Naive thymus-derived CD4-positive, alpha-beta T cell (primary cell): ENCODE measurements at regions of chr5 and their contacts with region 1.

Region 1: DNA sequence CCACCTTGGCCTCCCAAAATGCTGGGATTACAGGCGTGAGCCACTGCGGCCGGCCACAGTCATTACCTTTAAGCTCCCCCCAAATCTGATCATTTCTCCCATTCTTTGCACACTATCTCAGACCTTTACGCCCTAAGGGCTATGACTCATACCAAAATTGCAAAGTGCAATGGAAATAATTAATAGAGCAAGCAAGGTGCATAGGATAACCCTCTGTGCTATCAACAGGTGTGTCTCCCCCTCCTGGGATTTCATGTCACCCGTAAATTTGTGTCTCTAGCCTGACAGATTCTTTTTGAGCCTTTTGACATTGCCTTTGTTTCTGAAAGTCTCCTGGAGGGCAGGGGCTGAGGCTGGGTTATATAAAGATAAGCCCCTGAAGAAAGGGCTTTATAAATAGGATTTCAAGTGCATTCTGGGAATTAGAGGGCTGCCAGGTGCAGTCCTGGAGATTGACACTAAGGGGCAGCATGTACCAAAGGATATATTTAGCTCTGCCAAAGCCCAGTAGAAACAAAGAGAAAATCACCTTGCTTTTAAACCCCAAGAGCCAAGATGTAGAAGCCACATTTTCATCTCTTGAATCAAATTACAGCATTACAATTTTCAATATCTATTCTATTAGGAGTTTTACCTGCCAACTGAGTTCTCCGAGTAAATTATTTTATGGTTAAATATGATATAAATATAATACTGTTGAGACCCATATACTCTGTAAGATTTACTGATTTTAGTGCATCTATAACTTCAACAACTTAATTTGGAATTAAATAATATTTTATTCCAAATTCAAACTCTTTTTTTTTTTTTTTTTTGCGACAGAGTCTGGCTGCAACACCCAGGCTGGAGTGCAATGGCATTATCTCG is 18.2 kb downstream of the S100Z start:
- DNase-seq: peak; percentile 14 to 63 (median 53)
- ATAC-seq: peak; percentile 90
- H3K4me3 ChIP-seq: no peak overlapping the region
- H3K4me3 Mint-ChIP-seq: no peak overlapping the region
- H3K27ac ChIP-seq: no peak overlapping the region
- H3K27ac Mint-ChIP-seq: no peak overlapping the region
- H3K4me1 ChIP-seq: no peaks in the 10 kb centered on the region
- H3K4me1 Mint-ChIP-seq: peaks cover 0 to 4% (median 0%) of the 10 kb centered on the region in 7 donors
- H3K27me3 ChIP-seq: no peaks in the 10 kb centered on the region
- H3K27me3 Mint-ChIP-seq: no peaks in the 10 kb centered on the region

Region 2: GRCh38 chr5:76849419-76850291 is 18.4 kb before region 1 on chr5 and contains the start of gene S100Z:
- CTCF ChIA-PET with region 1: no interaction called
- POLR2A ChIA-PET with region 1: no interaction called
- intact Hi-C with region 1: no loop called
- DNase-seq: peak in 7 of 9 donors; percentile 20 to 56 (median 45)
- ATAC-seq: peak; percentile 84
- H3K4me3 ChIP-seq: no peak within 1 kb of the TSS
- H3K4me3 Mint-ChIP-seq: peak within 1 kb of the TSS; percentile 56 to 82 (median 68)
- H3K27ac ChIP-seq: peak within 1 kb of the TSS; percentile 44
- H3K27ac Mint-ChIP-seq: peak within 1 kb of the TSS; percentile 58 to 94 (median 81)
- H3K4me1 ChIP-seq: peaks cover 0 to 25% of the 10 kb centered on the region in 2 donors
- H3K4me1 Mint-ChIP-seq: peaks cover 21 to 43% (median 35%) of the 10 kb centered on the region in 7 donors
- H3K27me3 ChIP-seq: no peaks in the 10 kb centered on the region
- H3K27me3 Mint-ChIP-seq: peaks cover 0 to 2% (median 0%) of the 10 kb centered on the region in 5 donors
- total RNA-seq, gene S100Z: 1.3 to 5.3 (median 4.2) TPM in 3 of 5 experiments, not detected in the others

Region 3: DNA sequence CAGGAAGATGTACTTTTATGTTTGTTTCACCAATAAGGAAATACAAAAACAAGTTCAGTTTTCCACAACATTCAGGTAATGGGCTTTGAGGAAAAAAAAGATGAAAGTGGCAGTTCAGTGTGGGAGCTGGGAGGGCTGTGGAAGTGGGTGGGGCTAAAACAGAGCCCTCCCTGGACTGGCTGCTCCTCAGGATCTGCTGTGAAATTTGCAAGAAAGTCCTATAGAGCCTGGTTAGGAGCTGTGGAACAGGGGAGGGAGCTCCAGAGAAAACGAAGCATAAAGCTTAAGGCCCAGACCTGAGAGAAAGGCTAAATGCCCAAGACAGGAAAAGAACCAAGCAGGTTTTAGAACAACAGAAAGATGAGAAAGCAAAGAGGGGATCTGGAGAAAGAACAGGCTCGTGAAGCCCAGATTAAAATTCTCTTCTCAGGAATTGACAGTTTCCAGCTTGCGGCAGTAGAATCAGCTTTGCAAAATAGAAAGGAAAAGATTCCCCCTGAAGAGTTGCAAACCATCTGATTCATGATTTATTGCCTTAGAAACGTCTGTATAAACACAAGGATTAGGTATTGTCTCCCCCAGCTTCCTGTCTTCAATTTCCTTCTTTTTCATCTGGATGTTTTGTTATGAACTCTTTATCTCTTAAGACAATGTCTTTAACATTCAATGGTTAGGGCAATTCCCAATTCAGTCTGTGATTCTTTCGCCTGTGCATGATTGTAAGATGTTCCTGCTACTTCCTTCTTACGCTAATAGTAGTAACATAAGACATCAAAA is 58.5 kb after region 1 on chr5:
- CTCF ChIA-PET with region 1: no interaction called
- POLR2A ChIA-PET with region 1: no interaction called
- intact Hi-C with region 1: no loop called
- DNase-seq: no peak
- ATAC-seq: no peak
- H3K4me3 ChIP-seq: no peak overlapping the region
- H3K4me3 Mint-ChIP-seq: no peak overlapping the region
- H3K27ac ChIP-seq: no peak overlapping the region
- H3K27ac Mint-ChIP-seq: no peak overlapping the region
- H3K4me1 ChIP-seq: no peaks in the 10 kb centered on the region
- H3K4me1 Mint-ChIP-seq: no peaks in the 10 kb centered on the region
- H3K27me3 ChIP-seq: no peaks in the 10 kb centered on the region
- H3K27me3 Mint-ChIP-seq: peaks cover 3 to 16% (median 9%) of the 10 kb centered on the region in 5 donors

Region 4: GRCh38 chr5:76942581-76942980 is 74.5 kb after region 1 on chr5:
- CTCF ChIA-PET with region 1: no interaction called
- POLR2A ChIA-PET with region 1: no interaction called
- intact Hi-C with region 1: no loop called
- DNase-seq: no peak
- ATAC-seq: no peak
- H3K4me3 ChIP-seq: no peak overlapping the region
- H3K4me3 Mint-ChIP-seq: no peak overlapping the region
- H3K27ac ChIP-seq: no peak overlapping the region
- H3K27ac Mint-ChIP-seq: no peak overlapping the region
- H3K4me1 ChIP-seq: no peaks in the 10 kb centered on the region
- H3K4me1 Mint-ChIP-seq: peaks cover 0 to 3% (median 0%) of the 10 kb centered on the region in 7 donors
- H3K27me3 ChIP-seq: no peaks in the 10 kb centered on the region
- H3K27me3 Mint-ChIP-seq: peaks cover 9 to 41% (median 17%) of the 10 kb centered on the region in 5 donors

Region 5: GRCh38 chr5:77015938-77016569 is 148.0 kb after region 1 on chr5:
- CTCF ChIA-PET with region 1: no interaction called
- POLR2A ChIA-PET with region 1: no interaction called
- intact Hi-C with region 1: loop called in 1 of 2 experiments (anchors 1 kb)
- DNase-seq: peak in 5 of 9 donors; percentile 2 to 21 (median 8)
- ATAC-seq: no peak
- H3K4me3 ChIP-seq: no peak overlapping the region
- H3K4me3 Mint-ChIP-seq: no peak overlapping the region
- H3K27ac ChIP-seq: no peak overlapping the region
- H3K27ac Mint-ChIP-seq: no peak overlapping the region
- H3K4me1 ChIP-seq: no peaks in the 10 kb centered on the region
- H3K4me1 Mint-ChIP-seq: peaks cover 0 to 13% (median 0%) of the 10 kb centered on the region in 7 donors
- H3K27me3 ChIP-seq: no peaks in the 10 kb centered on the region
- H3K27me3 Mint-ChIP-seq: peaks cover 13 to 43% (median 23%) of the 10 kb centered on the region in 5 donors

Region 6: DNA sequence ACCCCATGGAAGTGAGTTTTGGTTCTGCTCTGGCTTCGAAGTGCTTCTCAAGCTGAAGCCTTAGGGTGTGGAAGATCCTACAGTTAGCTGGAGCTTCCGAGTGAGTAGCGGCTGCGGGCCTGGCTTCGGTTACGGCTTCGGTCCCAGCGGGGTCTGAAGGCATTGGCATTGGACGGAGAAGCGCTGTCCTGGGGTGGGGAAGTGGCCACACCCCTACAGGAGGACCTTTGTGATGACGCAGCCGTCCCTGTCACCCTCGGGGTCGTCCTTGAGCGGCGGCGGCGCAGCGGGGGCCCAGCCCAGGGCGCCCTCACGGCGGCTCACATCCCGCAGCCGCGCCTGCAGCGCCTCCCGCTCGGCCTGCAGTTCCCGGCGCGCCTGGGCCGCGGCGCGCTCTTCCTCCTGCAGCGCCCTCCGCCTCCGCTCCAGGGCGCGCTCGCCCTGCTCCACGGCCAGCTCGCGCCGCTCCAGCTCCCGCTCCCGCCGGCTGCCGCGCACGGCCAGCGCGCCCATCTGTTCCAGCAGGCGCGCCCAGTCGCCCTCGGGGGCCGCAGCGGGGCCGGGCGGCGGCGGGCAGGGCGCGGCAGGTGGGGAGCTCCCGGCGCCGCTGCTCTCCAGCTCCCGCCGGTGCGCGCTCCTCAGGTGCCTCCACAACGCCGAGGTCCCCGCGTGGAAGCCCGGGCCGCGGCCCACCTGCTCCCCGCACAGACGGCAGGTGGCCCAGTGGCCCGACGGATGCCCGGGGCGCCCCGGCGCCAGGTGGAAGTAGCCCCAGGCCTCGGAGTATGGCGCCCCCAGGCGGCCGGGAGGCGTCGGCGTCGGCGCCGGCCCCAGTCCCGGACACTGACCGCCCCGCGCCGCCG is 209.1 kb after region 1 on chr5:
- CTCF ChIA-PET with region 1: interaction called, 6 read pairs
- POLR2A ChIA-PET with region 1: no interaction called
- intact Hi-C with region 1: loop called (anchors 1 kb)
- DNase-seq: peak; percentile 12 to 78 (median 39)
- ATAC-seq: peak; percentile 88
- H3K4me3 ChIP-seq: peak overlapping the region; percentile 20
- H3K4me3 Mint-ChIP-seq: peak overlapping the region; percentile 46 to 80 (median 62)
- H3K27ac ChIP-seq: no peak overlapping the region
- H3K27ac Mint-ChIP-seq: no peak overlapping the region
- H3K4me1 ChIP-seq: peaks cover 3 to 4% of the 10 kb centered on the region in 2 donors
- H3K4me1 Mint-ChIP-seq: peaks cover 8 to 16% (median 11%) of the 10 kb centered on the region in 7 donors
- H3K27me3 ChIP-seq: no peaks in the 10 kb centered on the region
- H3K27me3 Mint-ChIP-seq: no peaks in the 10 kb centered on the region

Region 7: DNA sequence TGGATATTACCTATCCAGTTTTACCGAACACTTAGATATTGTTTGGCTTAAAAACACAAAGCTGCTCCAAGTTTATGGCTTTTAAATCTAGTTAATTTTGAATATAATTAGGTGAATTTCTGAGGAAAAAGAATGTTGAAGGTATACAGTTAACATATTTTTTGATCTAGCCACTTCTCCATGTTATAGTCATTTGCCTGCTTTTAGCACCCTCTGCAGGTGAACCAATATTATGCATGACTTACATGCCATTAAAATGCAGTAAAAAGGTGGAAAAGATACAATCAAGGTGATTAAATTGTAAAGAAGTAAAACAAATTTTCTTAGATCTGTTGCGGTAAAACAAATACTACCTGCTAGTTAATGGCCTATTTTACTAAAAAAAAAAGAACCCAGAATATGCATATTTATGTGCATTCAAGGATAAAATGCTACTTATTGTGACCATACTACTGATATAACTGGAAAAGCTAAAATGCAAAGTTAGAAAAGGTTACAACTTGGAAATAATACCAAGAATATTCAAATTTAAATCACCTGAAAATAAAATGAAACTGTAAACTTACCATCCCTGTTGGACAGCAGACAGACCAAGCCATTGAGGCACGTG is 1294.3 kb after region 1 on chr5:
- CTCF ChIA-PET with region 1: no interaction called
- POLR2A ChIA-PET with region 1: no interaction called
- intact Hi-C with region 1: loop called in 1 of 2 experiments (anchors 2 kb)
- DNase-seq: peak in 5 of 9 donors; percentile 5 to 20 (median 13)
- ATAC-seq: no peak
- H3K4me3 ChIP-seq: no peak overlapping the region
- H3K4me3 Mint-ChIP-seq: no peak overlapping the region
- H3K27ac ChIP-seq: no peak overlapping the region
- H3K27ac Mint-ChIP-seq: no peak overlapping the region
- H3K4me1 ChIP-seq: no peaks in the 10 kb centered on the region
- H3K4me1 Mint-ChIP-seq: no peaks in the 10 kb centered on the region
- H3K27me3 ChIP-seq: no peaks in the 10 kb centered on the region
- H3K27me3 Mint-ChIP-seq: no peaks in the 10 kb centered on the region